Adrenal gland (tissue), 19 donors: ENCODE measurements at regions of chr2 and their contacts with region 1.

Region 1: DNA sequence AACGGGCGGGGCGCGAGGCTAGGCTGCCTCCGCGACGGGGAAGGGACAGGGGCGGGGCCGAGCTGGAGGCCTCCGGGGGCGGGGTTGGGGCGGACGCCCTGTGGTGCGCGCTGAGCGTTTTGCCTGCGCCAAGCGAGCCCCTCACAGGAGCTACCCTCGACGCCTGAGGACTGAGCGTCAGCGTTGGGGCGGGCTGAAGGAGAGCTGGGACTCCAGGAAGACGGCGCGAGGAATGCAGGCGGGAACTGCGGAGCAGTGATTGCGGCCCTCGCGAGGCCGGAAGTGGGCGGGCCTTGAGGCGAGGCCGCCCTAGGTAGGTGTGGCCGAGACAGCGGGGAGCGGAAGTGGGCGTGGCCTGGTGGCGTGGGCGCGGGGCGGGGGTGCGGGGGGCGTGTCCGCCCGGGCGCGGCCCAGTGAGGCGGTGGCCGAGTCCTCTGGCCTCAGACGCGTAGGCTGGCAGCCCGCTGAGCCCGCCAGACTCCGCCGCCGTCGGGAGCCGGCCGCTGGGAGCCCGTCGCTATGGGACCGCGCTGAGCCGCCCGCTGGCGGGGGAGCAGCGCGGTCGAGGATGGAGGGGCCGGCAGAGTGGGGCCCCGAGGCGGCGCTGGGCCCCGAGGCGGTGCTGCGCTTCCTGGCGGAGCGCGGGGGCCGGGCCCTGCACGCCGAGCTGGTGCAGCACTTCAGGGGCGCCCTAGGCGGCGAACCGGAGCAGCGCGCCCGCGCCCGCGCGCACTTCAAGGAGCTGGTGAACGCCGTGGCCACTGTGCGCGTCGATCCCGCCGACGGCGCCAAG is at the starts of genes SEPTIN10 and SOWAHC:
- DNase-seq: peak; percentile 96 to 98 (median 97)
- H3K4me3 ChIP-seq: peak within 1 kb of the TSS; percentile 21 to 97 (median 70)
- H3K27ac ChIP-seq: peak within 1 kb of the TSS; percentile 84 to 100 (median 98)
- H3K4me1 ChIP-seq: peaks cover 0 to 53% of the 10 kb centered on the region in 2 donors
- H3K27me3 ChIP-seq: no peaks in the 10 kb centered on the region
- CTCF ChIP-seq: peak in 1 of 6 experiments; percentile 20
- POLR2A ChIP-seq: peak; percentile 89 to 92
- total RNA-seq, gene SEPTIN10: 32.5 to 91.3 (median 47.3) TPM
- total RNA-seq, gene SOWAHC: 5.5 to 15.5 (median 8.4) TPM

Region 2: GRCh38 chr2:109715313-109715805 is 101.2 kb after region 1 on chr2:
- intact Hi-C with region 1: loop called in 1 of 2 experiments (anchors 10 kb)
- DNase-seq: peak in 6 of 7 donors; percentile 45 to 71 (median 60)
- H3K4me3 ChIP-seq: no peak overlapping the region
- H3K27ac ChIP-seq: no peak overlapping the region
- H3K4me1 ChIP-seq: no peaks in the 10 kb centered on the region
- H3K27me3 ChIP-seq: no peaks in the 10 kb centered on the region
- CTCF ChIP-seq: peak; percentile 31 to 77 (median 62)
- POLR2A ChIP-seq: no peak